ENCODE measurements at regions of chr3 and their contacts with region 1.

Region 1: GRCh38 chr3:14947886-14948555 is 638 bp downstream of the NR2C2 start:
- DNase-seq: peak; percentile 95 to 98
- ATAC-seq: peak; percentile 94 to 97 (median 96)
- H3K4me3 ChIP-seq: peak overlapping the region; percentile 81
- H3K27ac ChIP-seq: peak overlapping the region; percentile 95
- H3K4me1 ChIP-seq: peaks cover 34% of the 10 kb centered on the region
- H3K27me3 ChIP-seq: no peaks in the 10 kb centered on the region
- CTCF ChIP-seq: no peak

Region 2: DNA sequence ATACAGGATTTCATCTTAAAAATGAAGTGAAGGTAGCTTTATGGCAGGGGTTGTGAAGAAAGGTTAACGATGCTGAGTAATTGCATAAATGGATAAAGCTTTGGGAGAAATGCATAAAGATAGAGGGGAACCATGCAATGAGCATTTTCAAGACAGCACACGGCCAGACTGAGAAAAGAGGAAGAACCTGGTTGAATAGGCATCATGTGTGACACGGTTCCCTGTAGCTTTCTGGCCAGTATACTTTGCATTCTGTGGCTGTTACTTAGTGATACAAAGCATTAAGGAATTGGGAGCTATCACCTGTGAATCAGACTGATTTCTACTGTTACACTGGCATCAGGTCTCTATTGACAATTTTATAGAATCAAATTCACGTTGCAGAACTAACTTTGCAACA is 32.7 kb after region 1 on chr3:
- intact Hi-C with region 1: no loop called
- DNase-seq: no peak
- ATAC-seq: no peak
- H3K4me3 ChIP-seq: no peak overlapping the region
- H3K27ac ChIP-seq: no peak overlapping the region
- H3K4me1 ChIP-seq: peaks cover 5% of the 10 kb centered on the region
- H3K27me3 ChIP-seq: no peaks in the 10 kb centered on the region
- CTCF ChIP-seq: no peak

Region 3: GRCh38 chr3:15007681-15008141 is 59.7 kb after region 1 on chr3:
- intact Hi-C with region 1: loop called in 1 of 2 experiments (anchors 5 kb)
- DNase-seq: peak in 1 of 2 donors; percentile 55
- ATAC-seq: peak; percentile 89 to 95 (median 91)
- H3K4me3 ChIP-seq: peak overlapping the region; percentile 15
- H3K27ac ChIP-seq: peak overlapping the region; percentile 83
- H3K4me1 ChIP-seq: peaks cover 16% of the 10 kb centered on the region
- H3K27me3 ChIP-seq: no peaks in the 10 kb centered on the region
- CTCF ChIP-seq: no peak

Region 4: GRCh38 chr3:15015456-15015855 is 67.4 kb after region 1 on chr3:
- intact Hi-C with region 1: loop called in 1 of 2 experiments (anchors 5 kb)
- DNase-seq: peak; percentile 71 to 93
- ATAC-seq: peak; percentile 81 to 91 (median 86)
- H3K4me3 ChIP-seq: no peak overlapping the region
- H3K27ac ChIP-seq: peak overlapping the region; percentile 75
- H3K4me1 ChIP-seq: peaks cover 6% of the 10 kb centered on the region
- H3K27me3 ChIP-seq: no peaks in the 10 kb centered on the region
- CTCF ChIP-seq: no peak

Region 5: GRCh38 chr3:15051531-15051930 is 103.5 kb after region 1 on chr3:
- intact Hi-C with region 1: loop called in 1 of 2 experiments (anchors 5 kb)
- DNase-seq: peak in 1 of 2 donors; percentile 63
- ATAC-seq: peak; percentile 58 to 85 (median 80)
- H3K4me3 ChIP-seq: no peak overlapping the region
- H3K27ac ChIP-seq: no peak overlapping the region
- H3K4me1 ChIP-seq: no peaks in the 10 kb centered on the region
- H3K27me3 ChIP-seq: no peaks in the 10 kb centered on the region
- CTCF ChIP-seq: peak; percentile 30

Region 6: GRCh38 chr3:15098503-15099363 is 150.7 kb after region 1 on chr3 and contains the start of gene RBSN:
- intact Hi-C with region 1: loop called in 1 of 2 experiments (anchors 5 kb)
- DNase-seq: peak; percentile 97 to 98
- ATAC-seq: peak; percentile 68 to 80 (median 76)
- H3K4me3 ChIP-seq: peak within 1 kb of the TSS; percentile 88
- H3K27ac ChIP-seq: peak within 1 kb of the TSS; percentile 89
- H3K4me1 ChIP-seq: peaks cover 41% of the 10 kb centered on the region
- H3K27me3 ChIP-seq: no peaks in the 10 kb centered on the region
- CTCF ChIP-seq: no peak
- total RNA-seq, gene RBSN: 18.6 to 26.3 (median 23.2) TPM